ENCODE measurements at regions of chr10 and their contacts with region 1.

Region 1: DNA sequence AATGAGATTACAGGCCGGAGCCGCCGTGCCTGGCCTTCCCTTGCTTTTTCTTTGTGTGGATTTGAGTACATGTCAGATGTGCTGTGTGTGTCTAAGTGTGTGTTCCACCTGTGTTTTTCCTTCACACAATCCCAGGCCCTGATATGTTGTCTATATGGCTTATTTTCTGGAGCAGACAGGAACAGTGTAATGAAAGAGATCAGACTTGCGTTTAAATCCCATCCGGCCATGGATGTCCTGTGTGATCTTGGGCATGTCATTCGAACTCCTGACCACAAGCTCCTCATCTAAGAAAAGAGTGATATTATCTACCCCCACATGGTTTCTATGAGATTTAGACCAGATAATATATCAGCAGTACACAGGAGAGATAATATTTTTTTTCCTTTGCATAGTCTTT is 37.2 kb downstream of the APBB1IP start:
- DNase-seq: no peak
- H3K4me3 Mint-ChIP-seq: peak overlapping the region; percentile 61
- H3K27ac Mint-ChIP-seq: peak overlapping the region; percentile 90
- H3K4me1 Mint-ChIP-seq: peaks cover 77% of the 10 kb centered on the region
- H3K27me3 Mint-ChIP-seq: no peaks in the 10 kb centered on the region

Region 2: GRCh38 chr10:26448706-26449435 is 26.5 kb before region 1 on chr10:
- CTCF ChIA-PET with region 1: interaction called, 3 read pairs
- POLR2A ChIA-PET with region 1: interaction called, 11 read pairs
- DNase-seq: peak; percentile 87
- H3K4me3 Mint-ChIP-seq: peak overlapping the region; percentile 54
- H3K27ac Mint-ChIP-seq: peak overlapping the region; percentile 86
- H3K4me1 Mint-ChIP-seq: peaks cover 72% of the 10 kb centered on the region
- H3K27me3 Mint-ChIP-seq: no peaks in the 10 kb centered on the region

Region 3: GRCh38 chr10:26681076-26681475 is 205.7 kb after region 1 on chr10:
- CTCF ChIA-PET with region 1: no interaction called
- POLR2A ChIA-PET with region 1: no interaction called
- DNase-seq: no peak
- H3K4me3 Mint-ChIP-seq: no peak overlapping the region
- H3K27ac Mint-ChIP-seq: no peak overlapping the region
- H3K4me1 Mint-ChIP-seq: peaks cover 10% of the 10 kb centered on the region
- H3K27me3 Mint-ChIP-seq: peaks cover 12% of the 10 kb centered on the region